ENCODE measurements at regions of chr4 and their contacts with region 1.

Region 1: DNA sequence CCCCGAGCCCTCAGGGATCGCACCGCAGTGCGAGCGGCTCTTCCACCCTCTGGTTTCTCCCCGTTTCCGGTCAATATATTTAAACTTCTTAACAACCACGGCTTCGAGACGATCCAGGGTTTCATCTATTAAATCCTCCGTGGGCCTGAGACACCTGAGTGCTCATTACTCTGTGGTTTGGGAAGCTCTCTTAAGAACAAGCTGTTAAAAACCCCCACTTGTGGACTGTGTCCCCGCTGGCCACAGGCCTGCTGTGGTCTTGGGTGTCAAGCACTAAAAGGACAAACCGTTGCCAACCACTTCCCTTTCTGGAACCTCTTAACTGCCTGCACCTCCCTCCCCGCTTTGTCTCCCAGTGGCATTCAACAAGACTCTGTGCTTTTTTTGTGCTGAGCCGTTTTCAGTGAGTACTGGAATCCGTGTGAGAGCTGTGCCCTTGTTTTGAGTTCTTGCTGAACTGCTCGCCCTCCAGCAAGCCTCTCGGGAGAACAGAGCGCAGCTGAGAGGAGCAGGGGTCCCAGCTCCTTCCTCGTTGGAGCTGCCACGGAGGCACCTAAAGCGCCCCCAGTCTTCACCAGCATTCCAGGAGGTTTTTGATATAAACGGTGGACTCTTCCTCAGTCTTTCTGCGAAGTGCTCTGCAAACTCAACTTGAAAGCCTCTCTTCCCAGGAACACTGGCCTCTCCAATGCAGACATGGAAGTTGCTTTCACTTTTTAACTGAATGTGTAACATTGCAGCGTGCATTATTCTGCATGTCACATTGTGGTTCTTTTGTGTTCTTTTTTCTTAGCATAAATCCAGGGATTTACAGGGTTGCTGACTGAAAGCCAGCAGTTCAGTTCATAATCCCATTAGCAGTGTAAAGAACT is 691 bp upstream of the IGFBP7 start:
- DNase-seq: peak; percentile 40 to 59
- ATAC-seq: peak; percentile 32 to 65 (median 62)
- H3K4me3 ChIP-seq: peak overlapping the region; percentile 93 to 100 (median 96)
- H3K27ac ChIP-seq: peak overlapping the region; percentile 93 to 100 (median 98)
- H3K4me1 ChIP-seq: peaks cover 3 to 66% (median 39%) of the 10 kb centered on the region in 9 donors
- H3K27me3 ChIP-seq: no peaks in the 10 kb centered on the region
- CTCF ChIP-seq: no peak

Region 2: GRCh38 chr4:56480691-56481090 is 630.2 kb before region 1 on chr4:
- intact Hi-C with region 1: no loop called
- DNase-seq: no peak
- ATAC-seq: no peak
- H3K4me3 ChIP-seq: no peak overlapping the region
- H3K27ac ChIP-seq: no peak overlapping the region
- H3K4me1 ChIP-seq: no peaks in the 10 kb centered on the region
- H3K27me3 ChIP-seq: no peaks in the 10 kb centered on the region
- CTCF ChIP-seq: no peak

Region 3: DNA sequence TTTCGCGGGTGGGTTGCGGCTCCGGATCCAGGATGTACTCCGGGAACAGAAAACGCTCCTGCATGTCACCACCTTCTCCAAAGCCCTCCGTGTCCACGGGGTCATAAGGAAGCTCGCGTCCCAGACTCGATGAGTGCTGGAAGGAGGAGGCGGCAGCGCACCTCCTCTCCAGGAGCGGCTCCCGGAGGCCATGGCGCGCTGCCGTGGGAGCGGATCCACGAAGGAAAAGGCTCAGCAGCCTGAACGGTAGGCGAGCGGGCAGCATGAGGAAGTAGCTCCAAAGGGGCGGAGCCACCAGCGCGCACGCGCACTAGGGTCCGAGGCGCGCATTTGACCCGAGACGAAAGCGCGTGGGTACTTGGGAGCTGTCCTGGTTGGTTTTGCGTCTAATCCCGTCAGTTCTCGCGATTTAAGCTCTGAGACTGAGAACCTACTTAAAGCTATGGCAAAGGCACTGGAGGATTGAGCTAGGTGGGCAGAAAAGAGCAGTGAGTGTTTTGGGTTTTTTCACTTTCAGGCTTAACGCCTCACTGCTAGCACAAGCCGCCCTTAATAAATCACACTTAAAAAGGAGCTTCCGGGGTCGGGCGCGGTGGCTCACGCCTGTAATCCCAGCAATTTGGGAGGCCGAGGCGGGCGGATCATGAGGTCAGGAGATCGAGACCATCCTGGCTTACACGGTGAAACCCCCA is 133.4 kb before region 1 on chr4 and contains the start of gene NOA1:
- intact Hi-C with region 1: loop called in 2 of 10 experiments (anchors 5 kb)
- DNase-seq: peak; percentile 98
- ATAC-seq: peak; percentile 91 to 95 (median 93)
- H3K4me3 ChIP-seq: peak within 1 kb of the TSS; percentile 69 to 98 (median 83)
- H3K27ac ChIP-seq: peak within 1 kb of the TSS; percentile 68 to 94 (median 89)
- H3K4me1 ChIP-seq: peaks cover 0 to 63% (median 53%) of the 10 kb centered on the region in 9 donors
- H3K27me3 ChIP-seq: no peaks in the 10 kb centered on the region
- CTCF ChIP-seq: no peak
- total RNA-seq, gene NOA1: 11.0 to 14.7 (median 12.6) TPM

Region 4: GRCh38 chr4:57037982-57038604 is 72.8 kb before region 1 on chr4:
- intact Hi-C with region 1: loop called in 6 of 10 experiments (anchors 2 to 10 kb)
- DNase-seq: peak; percentile 60 to 76
- ATAC-seq: peak; percentile 37 to 82 (median 63)
- H3K4me3 ChIP-seq: no peak overlapping the region
- H3K27ac ChIP-seq: peak overlapping the region in 2 of 10 donors; percentile 20 to 93
- H3K4me1 ChIP-seq: peaks cover 10 to 51% (median 23%) of the 10 kb centered on the region in 9 donors
- H3K27me3 ChIP-seq: no peaks in the 10 kb centered on the region
- CTCF ChIP-seq: peak; percentile 66 to 92 (median 81)

Region 5: DNA sequence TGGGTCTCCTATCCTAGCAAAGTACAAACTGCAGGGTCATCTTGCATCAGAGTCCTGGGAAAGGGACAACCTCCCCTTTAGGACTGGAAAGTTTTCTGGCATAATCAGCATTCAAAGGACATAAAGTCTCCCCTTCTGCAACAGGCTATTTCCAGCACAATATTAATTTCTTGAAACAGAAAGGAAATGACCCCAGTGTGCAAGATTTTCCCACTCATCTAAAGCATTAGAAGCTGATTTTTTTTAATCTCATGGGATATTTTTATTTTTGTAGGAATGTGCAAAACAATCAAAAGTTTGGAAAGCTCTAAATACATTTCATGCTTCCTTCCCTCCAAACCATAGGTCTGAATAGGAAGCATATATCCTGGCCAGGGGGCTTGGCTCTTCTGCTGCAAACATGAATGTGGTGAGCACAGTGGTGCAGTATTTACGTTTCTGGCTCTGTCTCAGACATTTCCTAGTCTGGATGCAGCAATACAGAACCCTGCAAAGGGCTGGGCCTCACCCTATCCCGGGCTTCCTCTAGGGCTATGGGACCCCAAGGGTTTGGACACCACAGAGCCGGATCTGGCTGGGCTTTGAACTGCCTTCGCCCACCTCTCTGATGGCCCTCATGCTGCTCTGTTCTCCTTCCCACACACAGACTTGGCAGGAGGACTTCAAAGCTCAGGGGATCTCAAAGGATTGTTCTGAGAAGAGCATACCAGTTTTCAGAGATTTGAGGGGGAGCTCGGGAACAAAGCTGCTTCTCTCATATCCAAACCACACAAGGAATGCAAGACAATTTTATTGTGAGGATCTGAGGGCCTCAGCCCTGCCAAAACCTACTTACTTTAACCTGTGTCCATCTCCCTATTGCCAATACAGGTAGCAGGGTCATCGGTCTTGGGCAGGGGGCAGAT is 67.3 kb before region 1 on chr4:
- intact Hi-C with region 1: loop called in 7 of 10 experiments (anchors 2 to 10 kb)
- DNase-seq: peak in 1 of 2 donors; percentile 75
- ATAC-seq: peak; percentile 58 to 84 (median 73)
- H3K4me3 ChIP-seq: peak overlapping the region in 3 of 10 donors; percentile 5 to 10 (median 5)
- H3K27ac ChIP-seq: peak overlapping the region; percentile 48 to 93 (median 84)
- H3K4me1 ChIP-seq: peaks cover 18 to 100% (median 63%) of the 10 kb centered on the region in 9 donors
- H3K27me3 ChIP-seq: no peaks in the 10 kb centered on the region
- CTCF ChIP-seq: no peak

Region 6: GRCh38 chr4:57064811-57065711 is 45.8 kb before region 1 on chr4:
- intact Hi-C with region 1: loop called in 3 of 10 experiments (anchors 5 to 10 kb)
- DNase-seq: peak; percentile 45 to 59
- ATAC-seq: peak; percentile 58 to 80 (median 72)
- H3K4me3 ChIP-seq: peak overlapping the region in 5 of 10 donors; percentile 1 to 25 (median 11)
- H3K27ac ChIP-seq: peak overlapping the region; percentile 24 to 88 (median 74)
- H3K4me1 ChIP-seq: peaks cover 13 to 100% (median 95%) of the 10 kb centered on the region in 9 donors
- H3K27me3 ChIP-seq: no peaks in the 10 kb centered on the region
- CTCF ChIP-seq: no peak

Region 7: DNA sequence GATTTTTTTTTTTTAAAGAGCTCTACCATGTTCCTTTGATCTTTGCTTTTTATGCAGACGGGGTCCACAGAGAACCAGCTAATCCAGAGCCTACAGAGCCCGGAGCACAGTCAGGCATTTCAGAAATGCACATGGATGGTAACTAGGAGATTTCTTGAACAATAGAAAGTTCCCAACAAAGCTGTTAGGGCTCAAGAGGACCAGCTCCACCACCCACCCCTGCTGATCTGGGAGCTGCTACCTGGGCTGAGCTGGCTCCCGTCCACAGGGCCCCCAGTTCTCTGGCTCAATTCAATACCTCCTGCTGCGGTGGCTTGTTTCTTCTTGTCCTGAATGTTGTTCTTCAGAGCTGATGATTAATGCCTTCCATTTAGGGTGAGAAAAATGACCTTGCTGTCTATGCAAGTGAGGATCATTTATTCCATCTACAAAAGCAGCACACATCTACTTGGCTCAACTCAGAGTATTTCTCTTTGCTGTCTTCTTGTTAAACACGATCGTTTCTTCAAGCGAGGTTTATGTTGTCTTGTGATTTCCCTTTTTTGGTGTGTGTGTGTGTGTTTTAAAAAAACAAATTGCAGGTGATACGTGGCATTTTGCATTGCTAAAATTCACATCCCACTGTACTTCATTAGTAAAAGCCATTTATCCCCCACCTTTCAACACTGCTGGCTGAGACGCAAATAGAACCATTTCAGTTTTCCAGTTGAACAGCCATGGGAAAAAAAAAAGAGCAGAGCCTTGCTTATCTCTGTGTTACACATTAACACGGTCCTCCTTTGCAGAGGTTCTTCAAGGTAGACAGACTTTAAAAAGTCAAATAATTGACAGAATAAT is 32.0 kb before region 1 on chr4:
- intact Hi-C with region 1: loop called in 1 of 10 experiments (anchors 2 kb)
- DNase-seq: no peak
- ATAC-seq: peak in 5 of 8 donors; percentile 6 to 67 (median 52)
- H3K4me3 ChIP-seq: peak overlapping the region in 3 of 10 donors; percentile 5 to 16 (median 11)
- H3K27ac ChIP-seq: peak overlapping the region; percentile 21 to 100 (median 72)
- H3K4me1 ChIP-seq: peaks cover 14 to 100% (median 95%) of the 10 kb centered on the region in 9 donors
- H3K27me3 ChIP-seq: no peaks in the 10 kb centered on the region
- CTCF ChIP-seq: no peak

Measured in heart right ventricle (tissue), 16 donors.